CD14-positive monocyte (primary cell): ENCODE measurements at regions of chr17 and their contacts with region 1.

Region 1: DNA sequence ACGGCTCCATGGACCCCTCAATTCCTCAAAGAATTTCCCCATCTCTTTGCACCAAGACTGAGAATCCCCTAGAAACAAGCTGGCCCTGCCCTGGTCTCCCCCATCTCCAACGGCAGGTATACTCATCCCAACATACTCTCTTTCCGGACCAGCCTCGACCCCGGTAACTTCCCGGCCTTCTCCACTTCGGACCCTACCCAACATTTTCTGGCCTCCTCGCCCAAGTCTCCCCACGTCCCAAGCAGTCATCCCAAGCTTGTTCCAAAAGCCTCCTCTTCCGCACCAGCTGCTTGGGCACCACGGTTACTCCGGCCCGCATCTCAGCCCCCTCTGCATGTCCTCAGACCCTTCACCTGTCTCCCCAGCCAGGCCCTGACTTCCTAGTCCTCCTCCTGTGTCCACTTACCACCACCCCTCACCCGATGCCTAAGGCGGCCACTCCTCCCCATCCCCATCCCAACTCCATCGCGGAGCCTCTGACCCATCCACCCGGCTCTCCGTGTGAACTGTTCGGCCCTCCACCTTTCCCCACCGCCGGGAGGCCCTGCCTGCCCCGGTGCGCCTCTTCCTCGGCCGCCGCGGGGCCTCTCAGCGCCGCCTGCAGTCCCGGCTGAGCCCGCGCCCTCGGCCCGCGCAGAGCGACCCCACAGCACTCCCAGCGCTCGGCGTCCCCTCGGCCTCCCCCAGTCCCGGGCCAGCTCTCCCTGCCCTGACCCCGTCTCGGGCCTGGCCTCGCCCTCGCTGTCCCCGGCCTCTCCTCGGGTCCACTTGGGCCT is 1.0 kb downstream of the PITPNA start:
- DNase-seq: peak in 1 of 3 donors; percentile 31
- H3K4me3 ChIP-seq: peak overlapping the region; percentile 42 to 88 (median 84)
- H3K4me3 Mint-ChIP-seq: peak overlapping the region; percentile 91
- H3K27ac ChIP-seq: peak overlapping the region in 1 of 2 donors; percentile 66
- H3K27ac Mint-ChIP-seq: peak overlapping the region; percentile 72 to 83 (median 80)
- H3K4me1 ChIP-seq: peaks cover 31 to 48% of the 10 kb centered on the region in 2 donors
- H3K4me1 Mint-ChIP-seq: peaks cover 58% of the 10 kb centered on the region
- H3K27me3 ChIP-seq: no peaks in the 10 kb centered on the region
- H3K27me3 Mint-ChIP-seq: peaks cover 7 to 20% (median 14%) of the 10 kb centered on the region in 3 donors
- CTCF ChIP-seq: no peak

Region 2: GRCh38 chr17:1516388-1517161 is 45.0 kb before region 1 on chr17 and contains the start of gene INPP5K:
- intact Hi-C with region 1: loop called in 1 of 2 experiments (anchors 5 kb)
- DNase-seq: peak; percentile 98 to 99 (median 99)
- H3K4me3 ChIP-seq: peak within 1 kb of the TSS; percentile 73 to 99 (median 87)
- H3K4me3 Mint-ChIP-seq: peak within 1 kb of the TSS; percentile 90 to 94
- H3K27ac ChIP-seq: peak within 1 kb of the TSS; percentile 54 to 95
- H3K27ac Mint-ChIP-seq: peak within 1 kb of the TSS; percentile 91 to 95 (median 93)
- H3K4me1 ChIP-seq: peaks cover 22 to 29% of the 10 kb centered on the region in 2 donors
- H3K4me1 Mint-ChIP-seq: peaks cover 18% of the 10 kb centered on the region
- H3K27me3 ChIP-seq: no peaks in the 10 kb centered on the region
- H3K27me3 Mint-ChIP-seq: no peaks in the 10 kb centered on the region
- CTCF ChIP-seq: no peak
- polyA plus RNA-seq, gene INPP5K: 50.3 to 58.7 (median 53.0) TPM